A549 (cell line): ENCODE measurements at regions of chr10 and their contacts with region 1.

Region 1: GRCh38 chr10:63629363-63630084 is 108.3 kb downstream of the REEP3 start:
- DNase-seq: peak; percentile 86 to 97
- ATAC-seq: peak; percentile 70 to 86
- H3K4me3 ChIP-seq: peak overlapping the region; percentile 70
- H3K27ac ChIP-seq: peak overlapping the region; percentile 95 to 99
- H3K4me1 ChIP-seq: peaks cover 24% of the 10 kb centered on the region
- CTCF ChIP-seq: peak; percentile 89
- EP300 ChIP-seq: peak in 1 of 2 experiments; percentile 18; a peak in 1 of 5 replicates
- POLR2A ChIP-seq: no peak
- RAD21 ChIP-seq: peak; percentile 93 to 94

Region 2: DNA sequence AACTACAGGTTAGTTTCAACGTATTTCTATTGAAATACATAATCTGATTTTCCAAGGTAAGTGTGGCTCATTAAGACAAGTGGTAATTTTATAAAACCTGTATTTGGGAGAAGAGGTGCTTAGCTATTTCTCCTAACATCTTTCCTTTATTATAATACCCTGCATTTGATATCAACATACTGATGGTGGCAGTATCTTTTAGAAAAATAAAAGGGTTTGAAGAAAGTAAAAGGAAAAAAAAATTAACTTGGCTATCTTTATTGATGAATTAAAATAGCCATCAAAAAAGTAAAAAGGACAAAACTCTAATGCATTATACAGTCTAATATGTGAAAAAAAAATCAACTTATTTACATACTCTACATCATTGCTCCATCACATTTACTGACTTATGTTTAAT is 428.4 kb before region 1 on chr10:
- CTCF ChIA-PET with region 1: interaction called, 10 read pairs
- POLR2A ChIA-PET with region 1: interaction called, 3 read pairs
- DNase-seq: no peak
- ATAC-seq: no peak
- H3K4me3 ChIP-seq: no peak overlapping the region
- H3K27ac ChIP-seq: no peak overlapping the region
- H3K4me1 ChIP-seq: 0 out of 3 replicates have a peak, but pooled peaks cover 3% of the 10 kb centered on the region
- CTCF ChIP-seq: no peak
- EP300 ChIP-seq: no peak
- POLR2A ChIP-seq: no peak
- RAD21 ChIP-seq: no peak

Region 3: DNA sequence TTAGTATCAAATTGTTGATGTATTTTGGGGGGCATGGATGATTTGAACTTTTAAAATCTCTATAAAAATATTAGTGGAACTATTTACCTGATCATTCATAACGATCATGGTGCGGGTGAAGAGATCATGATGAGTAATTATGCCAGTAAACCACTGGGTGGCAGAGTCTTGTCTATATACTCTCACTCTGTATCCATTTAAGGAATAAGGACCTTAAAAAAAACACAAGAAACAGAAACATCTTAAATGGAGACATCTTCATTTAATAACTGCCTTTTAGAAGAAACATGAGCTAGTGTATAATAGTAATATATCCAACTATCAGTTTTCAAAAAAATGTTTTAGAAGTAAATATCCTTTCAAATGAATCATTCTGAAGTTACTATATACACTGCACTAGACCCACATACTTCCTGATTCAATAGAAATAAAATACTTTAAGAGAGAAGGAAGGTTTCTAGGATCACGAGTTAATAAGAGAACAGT is 412.4 kb before region 1 on chr10:
- CTCF ChIA-PET with region 1: interaction called, 39 read pairs
- POLR2A ChIA-PET with region 1: no interaction called
- DNase-seq: peak; percentile 39 to 61
- ATAC-seq: peak; percentile 85 to 94
- H3K4me3 ChIP-seq: no peak overlapping the region
- H3K27ac ChIP-seq: no peak overlapping the region
- H3K4me1 ChIP-seq: peaks cover 12% of the 10 kb centered on the region; the same call in 2 of the 3 replicates
- CTCF ChIP-seq: peak; percentile 88
- EP300 ChIP-seq: no peak
- POLR2A ChIP-seq: no peak
- RAD21 ChIP-seq: peak; percentile 72 to 80

Region 4: DNA sequence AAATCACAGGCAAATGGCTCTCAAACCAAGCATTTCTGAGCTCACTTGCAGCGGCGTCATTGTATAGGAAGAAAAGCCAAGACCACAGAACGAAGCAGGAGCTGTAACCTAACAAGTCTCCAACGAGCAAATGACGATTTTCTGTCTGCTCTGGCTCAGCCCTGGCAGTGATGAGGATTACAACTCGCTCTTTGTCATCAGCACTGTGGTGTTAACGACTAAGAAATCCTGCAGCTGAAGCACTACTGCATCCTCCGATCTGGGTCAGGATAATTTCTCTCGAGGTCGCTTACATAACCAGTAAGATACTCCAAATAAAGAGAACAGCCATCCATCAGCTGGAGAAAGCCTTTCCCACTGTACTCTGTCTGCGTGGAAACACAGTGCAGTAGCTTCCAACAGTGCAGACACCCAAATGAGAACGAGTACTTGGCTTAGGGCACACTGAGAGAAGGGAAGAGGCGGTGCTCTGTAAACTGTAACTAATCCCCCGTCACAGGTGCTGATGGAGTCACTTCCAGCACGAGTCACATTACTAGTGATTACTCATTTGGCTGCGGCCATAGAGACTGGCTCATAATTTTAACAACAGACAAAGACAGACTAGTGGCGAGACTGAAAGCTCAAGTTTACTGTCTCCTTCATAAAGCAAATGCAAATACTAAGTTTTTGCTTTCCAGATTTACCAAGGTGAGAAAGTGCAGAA is 360.6 kb before region 1 on chr10:
- CTCF ChIA-PET with region 1: interaction called, 4 read pairs
- POLR2A ChIA-PET with region 1: interaction called, 16 read pairs
- DNase-seq: peak; percentile 71 to 93
- ATAC-seq: peak; percentile 94 to 99
- H3K4me3 ChIP-seq: peak overlapping the region; percentile 55
- H3K27ac ChIP-seq: peak overlapping the region; percentile 78 to 88
- H3K4me1 ChIP-seq: peaks cover 23% of the 10 kb centered on the region
- CTCF ChIP-seq: no peak
- EP300 ChIP-seq: no peak; a peak in 1 of 5 replicates
- POLR2A ChIP-seq: no peak; the same call in 1 of the 2 replicates
- RAD21 ChIP-seq: no peak; a peak in 1 of 5 replicates

Region 5: DNA sequence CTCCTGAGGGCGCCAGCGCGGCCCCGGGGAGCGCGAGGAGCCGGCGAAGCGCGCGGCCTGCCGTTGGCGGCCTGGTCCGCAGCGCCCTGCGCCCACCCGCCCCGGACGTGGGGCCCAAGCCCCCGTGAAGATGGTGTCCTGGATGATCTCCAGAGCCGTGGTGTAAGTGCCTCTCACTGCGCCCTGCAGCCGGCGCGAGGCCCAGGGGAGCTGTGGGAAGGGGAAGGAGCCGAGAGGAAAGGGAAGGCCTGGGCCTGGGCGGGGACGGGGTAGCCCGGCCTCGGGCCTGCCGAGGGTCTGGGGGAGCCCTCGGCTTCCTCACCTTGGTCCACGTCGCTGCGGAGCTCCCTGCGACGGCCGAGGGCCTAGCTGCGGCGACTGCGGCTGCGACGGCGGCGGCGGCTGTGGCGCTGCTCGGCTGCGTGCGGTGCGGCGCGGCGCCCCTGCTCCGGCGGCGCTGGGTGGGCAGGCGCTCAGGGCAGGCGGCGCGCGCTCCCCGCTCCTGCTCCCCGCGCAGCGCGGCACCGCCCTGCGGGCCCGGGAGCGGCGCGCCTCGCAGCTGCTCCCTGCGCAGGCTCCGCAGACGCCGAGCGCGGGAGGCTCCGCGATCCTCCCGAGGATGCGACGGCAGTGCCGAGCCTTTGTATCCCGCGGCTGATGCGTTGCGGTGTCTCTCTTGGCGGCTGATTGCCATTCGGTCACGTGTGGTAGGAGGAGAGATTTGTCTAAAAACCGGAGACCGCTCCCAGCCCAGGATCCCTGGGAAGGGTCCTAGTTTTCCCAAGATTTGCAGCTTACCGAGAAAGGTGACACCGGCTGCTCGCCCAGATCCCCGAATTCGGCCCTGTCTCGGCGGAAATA is 107.9 kb before region 1 on chr10:
- CTCF ChIA-PET with region 1: interaction called, 5 read pairs
- POLR2A ChIA-PET with region 1: interaction called, 23 read pairs
- DNase-seq: peak; percentile 56 to 77
- ATAC-seq: peak; percentile 87
- H3K4me3 ChIP-seq: peak overlapping the region; percentile 70
- H3K27ac ChIP-seq: peak overlapping the region; percentile 98 to 99
- H3K4me1 ChIP-seq: peaks cover 20% of the 10 kb centered on the region; the same call in 2 of the 3 replicates
- CTCF ChIP-seq: no peak
- EP300 ChIP-seq: no peak
- POLR2A ChIP-seq: peak; percentile 67
- RAD21 ChIP-seq: peak in 1 of 2 experiments; percentile 21; a peak in 2 of 5 replicates

Region 6: DNA sequence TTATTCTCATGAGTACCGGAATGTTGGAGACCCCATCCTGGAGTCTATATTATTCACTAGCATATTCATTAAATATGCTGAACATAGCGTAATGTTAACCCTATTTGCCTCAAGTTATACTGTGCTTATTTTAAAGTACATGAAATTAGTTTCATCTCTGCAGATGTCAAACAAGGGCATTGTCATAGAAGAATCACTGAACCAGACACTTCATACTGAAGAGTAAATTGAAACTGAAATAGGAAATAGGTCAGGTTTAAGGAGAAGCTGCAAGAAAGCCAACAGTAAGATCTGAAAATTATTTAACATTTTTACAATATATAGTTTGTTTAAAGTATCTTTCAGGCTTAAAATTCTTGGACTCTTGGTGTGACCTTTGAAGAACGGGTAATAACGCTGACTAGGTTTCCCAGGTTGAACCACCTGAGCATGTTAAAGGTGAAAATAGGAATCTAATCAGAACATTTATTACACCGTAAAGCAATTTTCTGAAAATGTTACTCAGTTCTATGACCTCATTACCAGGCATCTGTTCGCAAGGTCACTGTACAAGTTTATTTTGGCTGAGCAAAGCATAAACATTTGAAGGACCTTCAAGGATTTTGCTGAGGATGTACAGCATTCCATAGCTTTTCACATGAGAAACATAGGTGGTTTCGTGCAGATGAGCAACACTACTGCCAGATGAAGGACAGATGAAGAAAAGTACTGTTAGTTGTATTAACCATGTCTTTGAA is 25.6 kb before region 1 on chr10:
- CTCF ChIA-PET with region 1: no interaction called
- POLR2A ChIA-PET with region 1: no interaction called
- DNase-seq: no peak
- ATAC-seq: no peak
- H3K4me3 ChIP-seq: no peak overlapping the region
- H3K27ac ChIP-seq: no peak overlapping the region
- H3K4me1 ChIP-seq: 0 out of 3 replicates have a peak, but pooled peaks cover 5% of the 10 kb centered on the region
- CTCF ChIP-seq: no peak
- EP300 ChIP-seq: no peak
- POLR2A ChIP-seq: no peak
- RAD21 ChIP-seq: no peak

Region 7: DNA sequence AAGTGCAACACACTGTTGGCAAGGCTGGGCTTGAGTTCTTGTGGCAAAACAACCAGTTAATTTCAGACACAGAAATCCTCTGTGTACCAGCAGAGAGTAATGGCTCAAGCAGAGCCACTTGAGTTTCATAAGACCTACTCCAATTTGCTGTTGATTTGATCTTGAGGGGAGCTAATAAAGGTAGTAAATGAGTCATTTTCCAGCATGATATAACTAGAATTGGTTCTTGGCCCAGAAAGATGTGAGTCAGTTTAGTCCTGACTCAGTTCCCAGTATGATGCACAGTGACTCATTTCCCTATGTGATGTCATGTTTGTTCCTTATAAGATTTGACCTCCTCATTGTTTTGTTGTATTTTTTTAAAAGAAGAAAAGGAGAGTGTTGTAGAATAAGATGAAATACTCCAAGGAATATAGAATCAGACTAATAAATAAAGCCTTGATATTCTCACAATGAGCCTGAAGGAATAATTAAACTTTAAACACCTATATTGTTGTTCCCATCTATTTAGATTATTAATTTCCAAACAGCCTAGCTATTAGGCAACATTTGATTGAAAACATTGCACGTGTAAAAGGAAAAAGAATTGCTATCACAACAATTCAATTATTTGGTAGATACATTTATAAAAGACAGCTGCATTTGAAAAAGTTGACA is 77.9 kb after region 1 on chr10:
- CTCF ChIA-PET with region 1: interaction called, 22 read pairs
- POLR2A ChIA-PET with region 1: interaction called, 23 read pairs
- DNase-seq: peak; percentile 75 to 91
- ATAC-seq: peak; percentile 79 to 87
- H3K4me3 ChIP-seq: no peak overlapping the region
- H3K27ac ChIP-seq: peak overlapping the region; percentile 2 to 48; a peak in 2 of 6 replicates
- H3K4me1 ChIP-seq: peaks cover 45% of the 10 kb centered on the region
- CTCF ChIP-seq: no peak
- EP300 ChIP-seq: peak; percentile 39 to 50; a peak in 2 of 5 replicates
- POLR2A ChIP-seq: no peak
- RAD21 ChIP-seq: no peak; a peak in 1 of 5 replicates

Region 8: GRCh38 chr10:64036311-64036930 is 406.9 kb after region 1 on chr10:
- CTCF ChIA-PET with region 1: no interaction called
- POLR2A ChIA-PET with region 1: no interaction called
- DNase-seq: no peak
- ATAC-seq: no peak
- H3K4me3 ChIP-seq: no peak overlapping the region
- H3K27ac ChIP-seq: no peak overlapping the region
- H3K4me1 ChIP-seq: no peaks in the 10 kb centered on the region
- CTCF ChIP-seq: no peak
- EP300 ChIP-seq: no peak
- POLR2A ChIP-seq: no peak
- RAD21 ChIP-seq: no peak